Ascending aorta (tissue), 2 donors: ENCODE measurements at regions of chr10 and their contacts with region 1.

Region 1: DNA sequence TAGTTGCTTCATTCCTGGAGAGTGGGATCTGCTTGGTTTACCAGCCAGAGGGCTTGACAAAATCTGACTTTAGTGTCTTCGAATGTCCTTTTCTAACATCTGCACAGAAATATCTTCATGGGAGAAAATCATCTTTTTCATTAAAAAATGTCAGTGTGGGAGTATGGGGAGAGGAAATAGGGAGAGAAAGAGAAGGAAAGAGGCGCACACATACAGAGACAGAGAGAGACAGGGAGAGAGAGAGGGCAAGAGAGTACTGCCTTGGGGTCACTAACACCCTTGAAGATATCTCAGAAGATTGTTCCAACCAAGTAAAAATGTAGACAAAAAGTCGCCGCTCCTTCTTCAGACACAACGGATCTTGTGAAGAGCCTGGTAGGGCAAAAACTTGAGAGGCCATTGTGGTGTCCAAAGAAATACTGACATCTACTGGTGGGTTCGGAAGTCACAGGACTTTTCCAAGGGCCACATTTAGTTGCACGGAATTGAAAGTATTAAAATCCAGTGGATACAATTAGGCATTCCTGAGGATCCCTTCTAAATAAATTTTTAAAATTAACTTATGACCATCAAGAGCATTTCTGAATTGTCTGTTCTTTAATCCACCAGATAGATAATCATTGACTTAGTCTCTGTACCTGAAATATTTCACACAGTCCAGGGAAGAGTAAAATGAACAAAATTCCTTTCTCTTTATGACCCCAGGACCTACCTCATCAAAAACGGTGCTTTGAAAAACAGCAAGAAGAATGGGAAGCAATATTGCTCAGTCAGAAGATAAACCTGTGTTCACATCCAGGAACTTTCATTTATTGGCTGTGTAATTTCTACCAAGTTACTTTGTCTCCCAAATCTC is 29.7 kb downstream of the VIM start:
- DNase-seq: peak in 1 of 2 donors; percentile 79
- H3K4me3 ChIP-seq: peak overlapping the region; percentile 23 to 25
- H3K27ac ChIP-seq: no peak overlapping the region
- H3K4me1 ChIP-seq: no peaks in the 10 kb centered on the region
- H3K27me3 ChIP-seq: no peaks in the 10 kb centered on the region
- CTCF ChIP-seq: peak; percentile 83 to 88 (median 84)

Region 2: GRCh38 chr10:16828114-16828568 is 429.6 kb before region 1 on chr10:
- intact Hi-C with region 1: loop called (anchors 1 kb)
- DNase-seq: peak in 1 of 2 donors; percentile 80
- H3K4me3 ChIP-seq: peak overlapping the region; percentile 29 to 55
- H3K27ac ChIP-seq: peak overlapping the region; percentile 69 to 74
- H3K4me1 ChIP-seq: peaks cover 6 to 16% of the 10 kb centered on the region in 2 donors
- H3K27me3 ChIP-seq: no peaks in the 10 kb centered on the region
- CTCF ChIP-seq: peak; percentile 39 to 63 (median 49)

Region 3: GRCh38 chr10:16843252-16843870 is 414.3 kb before region 1 on chr10:
- intact Hi-C with region 1: loop called (anchors 1 kb)
- DNase-seq: no peak
- H3K4me3 ChIP-seq: no peak overlapping the region
- H3K27ac ChIP-seq: no peak overlapping the region
- H3K4me1 ChIP-seq: peaks cover 5 to 13% of the 10 kb centered on the region in 2 donors
- H3K27me3 ChIP-seq: no peaks in the 10 kb centered on the region
- CTCF ChIP-seq: peak; percentile 62 to 69 (median 67)

Region 4: GRCh38 chr10:16891375-16892313 is 366.1 kb before region 1 on chr10:
- intact Hi-C with region 1: loop called (anchors 5 kb)
- DNase-seq: peak in 1 of 2 donors; percentile 68
- H3K4me3 ChIP-seq: peak overlapping the region in 1 of 2 donors; percentile 9
- H3K27ac ChIP-seq: no peak overlapping the region
- H3K4me1 ChIP-seq: peaks cover 0 to 16% of the 10 kb centered on the region in 2 donors
- H3K27me3 ChIP-seq: no peaks in the 10 kb centered on the region
- CTCF ChIP-seq: peak; percentile 31 to 72 (median 70)

Region 5: DNA sequence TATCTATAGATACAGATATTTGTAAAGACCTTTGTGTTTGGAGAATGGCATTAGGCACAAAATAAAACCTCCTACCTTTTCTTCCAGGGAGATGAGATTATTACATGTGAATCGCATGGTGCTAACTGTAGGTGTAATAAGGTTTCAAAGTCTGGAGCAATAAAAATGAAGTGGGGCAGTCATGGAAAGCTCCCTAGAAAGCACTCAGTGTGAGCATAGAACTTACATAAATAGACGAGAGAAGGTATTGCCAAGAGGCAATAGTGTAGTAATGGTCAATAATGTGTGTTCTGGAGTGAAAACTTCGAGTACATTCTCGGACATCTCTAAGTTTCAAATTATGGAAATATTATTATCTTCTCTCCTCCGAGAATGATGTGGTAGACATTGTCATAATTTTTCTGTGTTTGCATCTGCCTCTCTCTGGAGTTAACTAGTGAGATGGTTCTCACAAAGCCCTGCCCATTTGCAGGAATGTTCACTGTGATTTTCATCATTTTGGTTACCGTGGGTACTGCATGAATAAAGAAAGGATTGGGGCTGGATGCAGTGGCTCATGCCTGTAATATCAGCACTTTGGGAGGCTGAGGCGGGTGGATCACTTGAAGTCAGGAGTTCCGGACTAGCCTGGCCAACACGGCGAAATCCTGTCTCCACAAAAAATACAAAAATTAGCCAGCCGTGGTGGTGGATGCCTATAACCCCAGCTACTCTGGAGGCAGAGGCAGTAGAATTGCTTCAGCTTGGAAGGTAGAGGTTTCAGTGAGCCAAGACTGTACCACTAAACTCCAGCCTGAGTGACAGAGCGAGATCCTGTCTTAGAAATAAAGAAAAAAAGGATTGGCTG is 19.0 kb before region 1 on chr10:
- intact Hi-C with region 1: loop called (anchors 2 kb)
- DNase-seq: peak in 1 of 2 donors; percentile 85
- H3K4me3 ChIP-seq: peak overlapping the region in 1 of 2 donors; percentile 1
- H3K27ac ChIP-seq: peak overlapping the region; percentile 54 to 55
- H3K4me1 ChIP-seq: peaks cover 12 to 34% of the 10 kb centered on the region in 2 donors
- H3K27me3 ChIP-seq: no peaks in the 10 kb centered on the region
- CTCF ChIP-seq: no peak

Region 6: DNA sequence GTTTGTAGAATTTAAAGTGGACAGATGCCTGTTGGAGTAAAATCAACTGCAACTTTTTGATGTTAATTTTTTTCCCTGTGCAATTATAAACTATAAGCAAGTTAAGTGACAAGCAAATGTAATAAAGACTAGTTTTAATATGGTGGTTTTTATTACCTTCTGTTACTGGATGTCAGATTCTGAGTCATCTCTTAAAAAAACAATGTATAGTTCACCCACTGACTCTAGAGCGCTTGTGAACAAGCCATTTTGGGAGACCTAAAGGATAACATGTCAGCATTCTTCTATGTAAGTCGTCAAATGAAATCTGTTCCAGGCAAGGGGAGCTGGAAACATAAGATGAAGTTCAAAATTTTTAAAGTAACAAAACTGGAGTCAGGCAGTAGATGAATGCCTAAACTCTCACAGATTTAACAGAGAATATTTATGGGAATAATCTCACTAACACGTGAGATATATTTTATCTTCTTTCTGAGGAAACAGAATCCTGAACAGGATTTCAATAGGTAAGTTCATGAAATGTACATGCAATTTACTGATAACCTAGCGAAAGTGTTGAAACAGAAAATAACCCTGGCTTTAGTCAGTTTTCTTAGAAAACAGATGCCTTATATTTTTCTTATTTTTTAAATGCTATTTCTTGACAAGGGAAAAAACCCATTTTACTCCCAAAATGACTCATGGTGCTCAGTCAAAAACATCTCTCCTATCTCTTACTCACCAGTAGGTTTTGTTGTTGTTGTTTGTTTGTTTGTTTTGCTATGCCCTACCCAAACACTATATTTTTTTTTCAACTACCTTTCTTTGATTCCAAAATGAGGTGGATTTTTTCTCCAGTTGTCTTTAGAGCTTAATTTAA is 785.7 kb after region 1 on chr10:
- intact Hi-C with region 1: no loop called
- DNase-seq: no peak
- H3K4me3 ChIP-seq: no peak overlapping the region
- H3K27ac ChIP-seq: no peak overlapping the region
- H3K4me1 ChIP-seq: peaks cover 0 to 11% of the 10 kb centered on the region in 2 donors
- H3K27me3 ChIP-seq: no peaks in the 10 kb centered on the region
- CTCF ChIP-seq: no peak